ENCODE measurements at regions of chr10 and their contacts with region 1.

Region 1: DNA sequence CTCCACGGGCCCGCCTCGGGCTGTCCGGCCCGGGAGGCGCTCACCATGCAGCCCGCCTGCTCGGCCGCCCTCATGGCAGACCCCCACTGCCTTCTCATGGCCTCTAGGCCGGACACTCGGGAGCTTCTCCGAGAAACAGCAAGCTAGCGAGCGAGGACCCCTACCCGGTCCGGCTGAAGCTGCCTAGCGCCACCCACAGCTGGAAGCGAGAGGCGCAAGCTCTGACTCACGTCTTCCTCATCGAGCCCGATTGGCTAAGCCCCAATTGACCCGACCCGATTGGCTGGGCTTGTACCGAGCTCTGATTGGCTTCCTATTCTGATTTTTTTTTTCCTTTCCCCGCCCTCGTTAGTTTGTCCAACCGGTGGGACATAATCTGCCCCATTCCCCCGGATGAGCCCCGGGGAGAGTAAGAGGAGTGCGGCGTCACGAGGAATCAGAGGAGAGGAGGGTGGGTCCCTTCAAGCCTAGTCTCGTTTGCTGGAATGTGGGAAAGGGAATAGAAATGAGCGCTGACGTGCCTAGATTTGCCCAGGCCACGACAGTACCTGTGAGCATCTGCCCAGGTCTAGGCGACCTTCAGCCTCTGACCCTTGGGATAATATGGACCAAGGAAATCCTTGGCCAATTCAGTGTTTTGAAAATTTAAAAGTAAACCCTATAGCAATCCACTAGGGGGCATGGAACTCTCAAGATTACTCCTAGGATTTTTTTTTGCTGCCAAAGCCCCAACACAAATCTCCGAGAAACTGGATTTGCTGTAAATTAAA is at the start of gene TYSND1:
- DNase-seq: peak; percentile 93
- ATAC-seq: peak; percentile 84
- H3K4me3 ChIP-seq: peak within 1 kb of the TSS; percentile 53 to 91 (median 81)
- H3K4me3 Mint-ChIP-seq: peak within 1 kb of the TSS; percentile 96
- H3K27ac ChIP-seq: peak within 1 kb of the TSS; percentile 84 to 93
- H3K27ac Mint-ChIP-seq: peak within 1 kb of the TSS; percentile 97
- H3K4me1 ChIP-seq: peaks cover 14 to 22% of the 10 kb centered on the region in 2 donors
- H3K4me1 Mint-ChIP-seq: peaks cover 37% of the 10 kb centered on the region
- H3K27me3 ChIP-seq: no peaks in the 10 kb centered on the region
- H3K27me3 Mint-ChIP-seq: no peaks in the 10 kb centered on the region
- CTCF ChIP-seq: peak; percentile 76
- total RNA-seq, gene TYSND1: 34.1 and 34.7 TPM in 2 replicates

Region 2: GRCh38 chr10:69408318-69409175 is 738.1 kb before region 1 on chr10:
- CTCF ChIA-PET with region 1: no interaction called
- POLR2A ChIA-PET with region 1: no interaction called
- intact Hi-C with region 1: loop called (anchors 5 kb)
- DNase-seq: peak; percentile 95
- ATAC-seq: peak; percentile 84
- H3K4me3 ChIP-seq: peak overlapping the region in 4 of 5 experiments; percentile 24 to 58 (median 40)
- H3K4me3 Mint-ChIP-seq: peak overlapping the region; percentile 81
- H3K27ac ChIP-seq: peak overlapping the region; percentile 67 to 73
- H3K27ac Mint-ChIP-seq: peak overlapping the region; percentile 89
- H3K4me1 ChIP-seq: peaks cover 21 to 39% of the 10 kb centered on the region in 2 donors
- H3K4me1 Mint-ChIP-seq: peaks cover 27% of the 10 kb centered on the region
- H3K27me3 ChIP-seq: peaks cover 0 to 4% (median 1%) of the 10 kb centered on the region in 4 experiments
- H3K27me3 Mint-ChIP-seq: peaks cover 3% of the 10 kb centered on the region
- CTCF ChIP-seq: peak; percentile 91

Region 3: GRCh38 chr10:69639291-69640195 is 507.1 kb before region 1 on chr10:
- CTCF ChIA-PET with region 1: no interaction called
- POLR2A ChIA-PET with region 1: no interaction called
- intact Hi-C with region 1: no loop called
- DNase-seq: peak; percentile 70
- ATAC-seq: peak; percentile 33
- H3K4me3 ChIP-seq: no peak overlapping the region
- H3K4me3 Mint-ChIP-seq: no peak overlapping the region
- H3K27ac ChIP-seq: no peak overlapping the region
- H3K27ac Mint-ChIP-seq: no peak overlapping the region
- H3K4me1 ChIP-seq: no peaks in the 10 kb centered on the region
- H3K4me1 Mint-ChIP-seq: no peaks in the 10 kb centered on the region
- H3K27me3 ChIP-seq: peaks cover 0 to 8% (median 1%) of the 10 kb centered on the region in 4 experiments
- H3K27me3 Mint-ChIP-seq: peaks cover 3% of the 10 kb centered on the region
- CTCF ChIP-seq: peak; percentile 85

Region 4: GRCh38 chr10:70132098-70133029 is 14.3 kb before region 1 on chr10 and contains the start of gene AIFM2:
- CTCF ChIA-PET with region 1: interaction called, 22 read pairs
- POLR2A ChIA-PET with region 1: no interaction called
- intact Hi-C with region 1: loop called (anchors 1 kb)
- DNase-seq: peak; percentile 57
- ATAC-seq: peak; percentile 79
- H3K4me3 ChIP-seq: peak within 1 kb of the TSS in 4 of 5 experiments; percentile 54 to 92 (median 66)
- H3K4me3 Mint-ChIP-seq: peak within 1 kb of the TSS; percentile 89
- H3K27ac ChIP-seq: peak within 1 kb of the TSS in 1 of 2 donors; percentile 61
- H3K27ac Mint-ChIP-seq: peak within 1 kb of the TSS; percentile 84
- H3K4me1 ChIP-seq: peaks cover 11 to 15% of the 10 kb centered on the region in 2 donors
- H3K4me1 Mint-ChIP-seq: peaks cover 19% of the 10 kb centered on the region
- H3K27me3 ChIP-seq: peaks cover 0 to 7% (median 0%) of the 10 kb centered on the region in 4 experiments
- H3K27me3 Mint-ChIP-seq: no peaks in the 10 kb centered on the region
- CTCF ChIP-seq: no peak
- total RNA-seq, gene AIFM2: 8.1 and 9.3 TPM in 2 replicates

Region 5: DNA sequence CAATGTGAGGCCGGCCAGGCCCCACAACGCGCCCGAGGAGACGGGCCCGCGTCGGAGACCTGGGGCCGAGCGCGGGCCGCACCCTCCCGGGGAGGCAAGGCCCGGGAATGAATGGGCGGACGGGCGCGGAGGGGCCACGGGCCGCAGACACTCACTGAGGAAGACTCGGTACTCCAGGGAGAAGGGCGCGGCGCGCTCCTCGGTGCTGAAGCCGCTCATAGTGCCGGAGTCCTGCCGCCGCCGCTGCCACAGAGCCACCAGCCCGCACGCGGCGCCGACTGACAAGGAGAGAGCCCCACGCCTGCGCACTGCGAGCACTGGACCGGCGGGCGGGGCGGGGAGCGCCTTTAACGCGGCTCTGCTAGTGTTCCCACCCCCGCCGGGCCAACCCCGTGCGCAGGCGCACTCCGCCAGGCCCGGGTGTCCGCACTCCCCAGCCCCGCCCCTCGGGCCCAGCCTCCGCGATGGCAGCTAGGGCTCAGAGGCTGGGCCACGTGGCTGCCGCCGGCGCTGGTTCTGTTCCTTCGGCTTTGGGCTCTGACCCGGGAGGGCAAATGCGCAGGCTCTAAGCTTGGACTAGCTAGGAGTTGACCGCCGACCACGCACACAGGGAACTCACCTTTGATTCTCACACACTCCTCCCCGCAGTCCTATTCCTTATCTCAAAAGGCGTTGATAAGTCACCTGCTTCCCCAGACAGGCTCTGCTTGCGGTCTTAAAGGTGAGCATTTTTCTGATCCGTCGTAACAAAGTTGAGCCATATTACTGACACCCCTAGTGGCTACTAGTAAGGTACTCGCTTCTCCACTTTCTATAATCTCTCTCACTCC is 86.7 kb after region 1 on chr10 and contains the start of gene PPA1:
- CTCF ChIA-PET with region 1: interaction called, 11 read pairs
- POLR2A ChIA-PET with region 1: interaction called, 6 read pairs
- intact Hi-C with region 1: loop called (anchors 1 kb)
- DNase-seq: peak; percentile 98
- ATAC-seq: peak; percentile 97
- H3K4me3 ChIP-seq: peak within 1 kb of the TSS; percentile 50 to 95 (median 87)
- H3K4me3 Mint-ChIP-seq: peak within 1 kb of the TSS; percentile 92
- H3K27ac ChIP-seq: peak within 1 kb of the TSS; percentile 75 to 77
- H3K27ac Mint-ChIP-seq: peak within 1 kb of the TSS; percentile 93
- H3K4me1 ChIP-seq: peaks cover 7 to 18% of the 10 kb centered on the region in 2 donors
- H3K4me1 Mint-ChIP-seq: peaks cover 13% of the 10 kb centered on the region
- H3K27me3 ChIP-seq: no peaks in the 10 kb centered on the region
- H3K27me3 Mint-ChIP-seq: no peaks in the 10 kb centered on the region
- CTCF ChIP-seq: peak; percentile 49
- total RNA-seq, gene PPA1: 39.4 and 40.6 TPM in 2 replicates

Region 6: DNA sequence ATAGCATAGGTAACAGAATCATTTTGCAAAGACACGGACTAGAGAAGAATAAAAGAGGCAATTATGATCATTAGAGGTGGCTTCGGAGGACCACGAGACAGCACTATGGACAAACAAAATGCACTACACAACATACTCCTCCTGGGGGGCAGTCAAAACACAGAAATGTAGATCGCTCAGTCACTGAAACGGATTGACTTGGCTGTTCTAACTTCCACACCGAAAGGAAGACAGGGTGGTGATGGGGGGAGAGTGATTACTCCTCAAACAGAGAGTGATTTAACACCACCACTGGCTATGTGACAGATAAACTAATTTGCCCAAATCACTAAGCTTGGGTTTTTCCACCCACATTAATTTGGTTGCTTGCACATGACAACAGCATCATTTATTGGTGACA is 100.7 kb after region 1 on chr10:
- CTCF ChIA-PET with region 1: no interaction called
- POLR2A ChIA-PET with region 1: no interaction called
- intact Hi-C with region 1: no loop called
- DNase-seq: no peak
- ATAC-seq: no peak
- H3K4me3 ChIP-seq: no peak overlapping the region
- H3K4me3 Mint-ChIP-seq: no peak overlapping the region
- H3K27ac ChIP-seq: no peak overlapping the region
- H3K27ac Mint-ChIP-seq: no peak overlapping the region
- H3K4me1 ChIP-seq: no peaks in the 10 kb centered on the region
- H3K4me1 Mint-ChIP-seq: no peaks in the 10 kb centered on the region
- H3K27me3 ChIP-seq: peaks cover 0 to 6% (median 0%) of the 10 kb centered on the region in 4 experiments
- H3K27me3 Mint-ChIP-seq: peaks cover 36% of the 10 kb centered on the region
- CTCF ChIP-seq: no peak

Region 7: DNA sequence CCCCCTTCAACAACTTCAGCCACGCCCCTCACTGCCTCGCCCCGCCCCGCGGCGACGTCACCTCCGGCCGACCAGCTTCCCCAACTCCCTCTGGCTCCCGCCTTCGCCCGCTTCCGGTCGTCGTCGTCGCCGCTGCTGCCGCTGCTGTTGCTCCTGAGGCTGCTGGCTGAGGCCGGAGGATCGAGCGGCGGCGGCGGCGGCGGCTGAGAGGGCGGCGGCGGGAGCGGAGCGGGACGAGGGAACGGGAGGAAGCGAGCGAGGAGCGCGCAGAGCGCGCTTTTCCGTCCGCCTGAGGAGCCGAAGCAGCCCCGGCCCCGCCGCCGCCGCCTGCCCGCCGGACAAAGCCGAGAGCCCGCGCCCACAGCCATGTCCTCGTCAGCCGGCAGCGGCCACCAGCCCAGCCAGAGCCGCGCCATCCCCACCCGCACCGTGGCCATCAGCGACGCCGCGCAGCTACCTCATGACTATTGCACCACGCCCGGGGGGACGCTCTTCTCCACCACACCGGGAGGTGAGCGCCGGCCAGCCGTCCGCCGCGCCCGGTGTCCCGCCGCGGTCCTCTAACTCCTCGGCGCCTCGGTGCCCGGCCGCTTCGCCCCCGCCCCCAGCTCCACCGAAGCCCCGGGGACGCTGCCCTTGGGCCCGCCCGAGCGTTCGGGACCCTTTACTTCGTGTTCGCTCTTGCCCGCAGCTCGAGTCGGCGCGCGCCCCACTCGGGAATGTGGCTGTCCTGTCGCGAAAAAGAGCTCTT is 257.5 kb after region 1 on chr10 and contains the start of gene EIF4EBP2:
- CTCF ChIA-PET with region 1: interaction called, 5 read pairs
- POLR2A ChIA-PET with region 1: no interaction called
- intact Hi-C with region 1: loop called (anchors 2 kb)
- DNase-seq: peak; percentile 97
- ATAC-seq: peak; percentile 99
- H3K4me3 ChIP-seq: peak within 1 kb of the TSS; percentile 53 to 88 (median 77)
- H3K4me3 Mint-ChIP-seq: peak within 1 kb of the TSS; percentile 94
- H3K27ac ChIP-seq: peak within 1 kb of the TSS; percentile 11 to 84
- H3K27ac Mint-ChIP-seq: peak within 1 kb of the TSS; percentile 96
- H3K4me1 ChIP-seq: peaks cover 23 to 24% of the 10 kb centered on the region in 2 donors
- H3K4me1 Mint-ChIP-seq: peaks cover 43% of the 10 kb centered on the region
- H3K27me3 ChIP-seq: no peaks in the 10 kb centered on the region
- H3K27me3 Mint-ChIP-seq: no peaks in the 10 kb centered on the region
- CTCF ChIP-seq: no peak
- total RNA-seq, gene EIF4EBP2: 37.8 and 38.2 TPM in 2 replicates

Region 8: DNA sequence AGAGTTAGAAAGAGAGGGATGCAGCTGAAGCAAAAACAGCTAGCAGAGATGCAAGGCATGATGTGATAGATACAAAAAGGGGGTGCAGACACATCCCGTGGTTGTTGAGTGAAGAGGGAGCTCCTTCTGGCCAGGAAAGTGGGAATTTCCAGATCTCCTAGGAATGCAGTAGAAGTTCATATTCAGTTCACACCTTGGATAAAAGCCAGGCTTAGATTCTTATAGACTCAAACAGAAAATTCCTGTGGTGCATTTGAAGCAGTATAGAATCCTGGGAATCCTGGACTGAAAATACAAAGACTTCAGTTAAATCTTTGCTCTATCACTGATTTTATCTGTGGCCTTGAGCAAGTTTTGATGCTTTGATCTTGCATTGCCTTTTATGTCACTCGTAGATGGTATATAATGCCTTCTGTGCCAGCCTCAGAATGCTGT is 702.9 kb after region 1 on chr10:
- CTCF ChIA-PET with region 1: no interaction called
- POLR2A ChIA-PET with region 1: no interaction called
- intact Hi-C with region 1: no loop called
- DNase-seq: no peak
- ATAC-seq: no peak
- H3K4me3 ChIP-seq: no peak overlapping the region
- H3K4me3 Mint-ChIP-seq: no peak overlapping the region
- H3K27ac ChIP-seq: no peak overlapping the region
- H3K27ac Mint-ChIP-seq: no peak overlapping the region
- H3K4me1 ChIP-seq: no peaks in the 10 kb centered on the region
- H3K4me1 Mint-ChIP-seq: no peaks in the 10 kb centered on the region
- H3K27me3 ChIP-seq: no peaks in the 10 kb centered on the region
- H3K27me3 Mint-ChIP-seq: no peaks in the 10 kb centered on the region
- CTCF ChIP-seq: no peak

Region 9: DNA sequence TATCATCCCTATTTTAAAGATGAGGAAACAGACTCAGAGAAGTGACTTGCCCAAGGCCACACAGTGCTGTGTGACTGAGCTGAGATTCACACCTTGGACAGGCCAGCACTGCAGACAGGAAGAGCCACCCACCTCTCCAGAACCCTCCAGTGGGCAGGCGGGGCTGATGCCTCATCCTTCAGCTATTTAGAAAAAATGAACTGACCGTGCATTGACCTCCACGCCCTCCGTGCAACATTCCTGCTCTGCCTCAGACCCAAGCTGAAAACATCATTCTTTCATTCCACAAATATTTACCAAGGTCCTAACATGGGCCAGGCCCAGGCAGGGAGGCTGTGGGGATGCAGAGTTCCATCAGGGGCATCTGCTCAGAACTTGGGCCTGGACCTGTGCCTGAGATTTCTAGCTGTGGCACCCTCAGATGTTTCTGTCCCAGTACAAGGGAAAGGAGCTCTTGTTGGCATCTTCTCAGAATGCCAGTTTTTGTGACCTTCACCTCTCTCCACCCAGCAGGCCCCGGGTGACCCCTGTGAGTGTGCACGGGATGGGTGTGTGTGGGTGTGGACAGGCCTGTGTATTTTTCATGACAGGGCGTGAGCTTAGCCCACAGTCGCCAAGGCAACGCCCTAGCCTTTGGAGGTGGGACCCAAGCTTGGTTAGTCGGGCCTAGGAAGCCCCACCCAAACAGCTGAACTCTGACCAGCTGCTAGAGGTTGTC is 1620.2 kb after region 1 on chr10:
- CTCF ChIA-PET with region 1: no interaction called
- POLR2A ChIA-PET with region 1: no interaction called
- intact Hi-C with region 1: loop called (anchors 5 kb)
- DNase-seq: peak; percentile 74
- ATAC-seq: peak; percentile 50
- H3K4me3 ChIP-seq: peak overlapping the region in 1 of 5 experiments; percentile 42
- H3K4me3 Mint-ChIP-seq: peak overlapping the region; percentile 84
- H3K27ac ChIP-seq: peak overlapping the region; percentile 88 to 95
- H3K27ac Mint-ChIP-seq: peak overlapping the region; percentile 99
- H3K4me1 ChIP-seq: peaks cover 54 to 93% of the 10 kb centered on the region in 2 donors
- H3K4me1 Mint-ChIP-seq: peaks cover 87% of the 10 kb centered on the region
- H3K27me3 ChIP-seq: no peaks in the 10 kb centered on the region
- H3K27me3 Mint-ChIP-seq: no peaks in the 10 kb centered on the region
- CTCF ChIP-seq: no peak

Measured in B cell (primary cell).